WTC11 (cell line): ENCODE measurements at regions of chr18 and their contacts with region 1.

Region 1: GRCh38 chr18:63994783-63995399 is 25.0 kb downstream of the SERPINB8 start:
- DNase-seq: peak; percentile 69
- ATAC-seq: peak; percentile 80
- H3K4me3 Mint-ChIP-seq: no peak overlapping the region
- H3K27ac Mint-ChIP-seq: no peak overlapping the region
- H3K4me1 Mint-ChIP-seq: no peaks in the 10 kb centered on the region
- H3K27me3 Mint-ChIP-seq: peaks cover 8% of the 10 kb centered on the region
- CTCF ChIP-seq: peak; percentile 73

Region 2: DNA sequence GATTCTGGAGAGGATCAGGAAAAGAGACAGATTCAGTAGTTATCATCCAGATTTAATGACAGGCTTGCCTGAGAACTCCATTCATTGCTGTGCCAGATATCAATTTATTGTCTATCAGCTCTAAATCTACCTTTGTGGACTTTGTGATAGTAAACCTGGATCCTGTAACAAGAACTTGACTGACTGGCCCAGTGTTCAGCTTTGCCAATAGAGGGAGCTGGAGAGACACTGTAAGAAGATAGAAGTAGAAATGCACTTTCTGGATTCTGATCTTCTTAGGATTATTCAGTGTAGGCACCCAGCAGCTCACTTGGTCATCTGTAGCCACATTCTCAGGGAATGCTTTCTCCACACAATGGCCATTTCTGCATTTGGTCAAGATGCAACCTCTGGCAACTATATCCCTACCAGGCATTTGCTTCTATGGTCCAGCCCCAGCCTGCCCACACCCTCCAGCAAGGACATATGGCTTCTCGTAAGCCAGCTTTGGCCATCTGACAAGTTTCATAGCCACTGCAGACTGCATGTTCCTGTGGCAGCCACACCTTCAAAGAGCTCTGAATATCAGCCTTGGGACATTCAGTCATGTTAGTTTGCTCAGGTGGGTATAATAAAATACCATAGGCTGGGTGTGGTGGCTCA is 31.2 kb before region 1 on chr18:
- CTCF ChIA-PET with region 1: interaction called, 20 read pairs
- POLR2A ChIA-PET with region 1: no interaction called
- DNase-seq: peak; percentile 46
- ATAC-seq: peak; percentile 88
- H3K4me3 Mint-ChIP-seq: no peak overlapping the region
- H3K27ac Mint-ChIP-seq: no peak overlapping the region
- H3K4me1 Mint-ChIP-seq: no peaks in the 10 kb centered on the region; the same call in 1 of the 2 replicates
- H3K27me3 Mint-ChIP-seq: peaks cover 10% of the 10 kb centered on the region
- CTCF ChIP-seq: peak; percentile 33; the same call in 1 of the 2 replicates

Region 3: DNA sequence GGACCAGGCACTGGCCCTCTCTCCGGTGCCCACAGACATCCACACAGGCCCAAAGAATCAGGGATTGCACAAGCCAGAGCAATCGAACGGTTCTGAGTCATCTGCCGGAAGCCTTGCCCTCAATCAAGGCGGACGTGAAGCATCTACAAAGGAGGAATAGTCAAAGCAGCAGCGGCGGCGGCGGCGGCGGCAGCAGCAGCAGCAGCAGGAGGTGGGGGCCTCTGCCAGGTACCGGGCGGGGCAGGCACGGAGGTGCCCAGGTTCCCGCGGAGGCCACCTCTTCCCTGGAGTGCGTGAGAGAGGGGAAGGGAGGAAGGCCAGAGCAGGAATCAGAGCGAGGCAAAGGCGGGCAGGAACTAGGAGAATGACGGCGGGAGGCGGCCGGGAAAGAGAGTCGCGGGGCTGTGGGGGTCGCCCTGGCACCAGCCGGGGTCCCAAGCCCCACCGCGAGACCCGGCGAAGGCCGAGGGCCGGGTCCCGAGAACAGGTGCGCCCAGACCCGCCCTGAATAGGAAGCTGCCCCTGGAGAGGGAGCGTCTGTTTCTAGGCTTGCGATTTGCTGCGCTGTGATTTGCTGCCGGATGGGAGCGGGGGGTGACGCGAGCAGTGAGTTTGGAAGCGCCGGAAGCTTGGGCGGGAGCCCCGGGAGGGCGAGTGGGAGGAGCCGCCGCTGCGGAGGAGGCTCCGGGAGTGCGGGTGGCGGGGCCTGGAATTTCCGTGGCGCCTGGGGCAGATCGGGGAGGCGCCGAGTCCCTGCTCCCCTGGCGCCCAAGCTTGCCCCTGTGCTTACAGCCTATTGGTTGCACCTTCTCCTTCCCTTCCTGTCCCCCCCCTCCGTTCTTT is 24.7 kb before region 1 on chr18 and contains the start of gene SERPINB8:
- CTCF ChIA-PET with region 1: interaction called, 10 read pairs
- POLR2A ChIA-PET with region 1: interaction called, 4 read pairs
- DNase-seq: peak; percentile 91
- ATAC-seq: peak; percentile 93
- H3K4me3 Mint-ChIP-seq: peak within 1 kb of the TSS; percentile 90
- H3K27ac Mint-ChIP-seq: peak within 1 kb of the TSS; percentile 97
- H3K4me1 Mint-ChIP-seq: peaks cover 21% of the 10 kb centered on the region
- H3K27me3 Mint-ChIP-seq: peaks cover 50% of the 10 kb centered on the region
- CTCF ChIP-seq: no peak
- total RNA-seq, gene SERPINB8: 0.46 to 0.73 TPM (median 0.57 TPM) in 3 replicates

Region 4: DNA sequence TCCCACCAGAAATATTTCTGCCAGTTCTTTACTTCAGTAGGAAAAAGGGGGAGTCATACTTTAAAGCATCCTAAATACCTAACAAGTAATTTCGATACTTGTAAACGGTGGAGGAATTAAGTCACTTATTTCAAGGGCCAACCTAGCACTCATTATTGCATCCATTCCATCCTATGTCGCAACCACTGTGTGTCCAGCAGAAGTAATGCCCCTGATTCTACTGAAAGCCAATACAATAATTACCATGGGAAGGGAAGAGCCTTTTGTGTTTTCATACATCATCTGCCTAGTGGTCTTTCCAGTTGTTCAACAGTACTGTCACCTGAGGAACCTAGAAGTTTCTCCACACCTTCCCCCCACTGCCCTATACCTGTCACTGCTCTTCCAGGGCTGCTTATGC is 12.5 kb before region 1 on chr18:
- CTCF ChIA-PET with region 1: interaction called, 17 read pairs
- POLR2A ChIA-PET with region 1: no interaction called
- DNase-seq: no peak
- ATAC-seq: no peak
- H3K4me3 Mint-ChIP-seq: no peak overlapping the region
- H3K27ac Mint-ChIP-seq: no peak overlapping the region
- H3K4me1 Mint-ChIP-seq: peaks cover 8% of the 10 kb centered on the region
- H3K27me3 Mint-ChIP-seq: peaks cover 42% of the 10 kb centered on the region
- CTCF ChIP-seq: no peak